AG04449 (cell line): ENCODE measurements at regions of chr11 and their contacts with region 1.

Region 1: GRCh38 chr11:10808553-10809372 is at the start of gene EIF4G2:
- DNase-seq: peak; percentile 86
- H3K4me3 ChIP-seq: peak within 1 kb of the TSS; percentile 90
- CTCF ChIP-seq: no peak

Region 2: DNA sequence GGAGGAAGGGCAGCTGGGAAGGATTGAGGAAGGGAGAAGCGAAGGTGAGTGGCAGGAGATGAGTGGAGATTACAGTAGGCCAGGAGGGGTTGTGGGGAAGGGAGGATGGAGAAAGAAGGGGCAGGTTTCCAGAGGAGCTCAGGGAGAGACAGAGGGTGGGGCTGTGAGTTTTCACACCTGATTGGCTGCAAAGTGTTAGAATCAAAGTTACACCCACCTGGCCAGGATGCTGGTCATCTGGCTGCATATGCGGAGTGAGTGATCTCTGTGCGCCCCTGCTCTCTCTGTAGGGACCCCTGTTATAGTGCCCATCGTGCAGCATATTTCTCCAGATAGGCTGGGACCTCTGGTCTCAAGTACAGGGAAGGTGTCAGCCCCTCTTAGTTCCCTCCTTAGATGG is 335.4 kb before region 1 on chr11:
- CTCF ChIA-PET with region 1: no interaction called
- POLR2A ChIA-PET with region 1: no interaction called
- DNase-seq: no peak
- H3K4me3 ChIP-seq: no peak overlapping the region
- CTCF ChIP-seq: no peak

Region 3: DNA sequence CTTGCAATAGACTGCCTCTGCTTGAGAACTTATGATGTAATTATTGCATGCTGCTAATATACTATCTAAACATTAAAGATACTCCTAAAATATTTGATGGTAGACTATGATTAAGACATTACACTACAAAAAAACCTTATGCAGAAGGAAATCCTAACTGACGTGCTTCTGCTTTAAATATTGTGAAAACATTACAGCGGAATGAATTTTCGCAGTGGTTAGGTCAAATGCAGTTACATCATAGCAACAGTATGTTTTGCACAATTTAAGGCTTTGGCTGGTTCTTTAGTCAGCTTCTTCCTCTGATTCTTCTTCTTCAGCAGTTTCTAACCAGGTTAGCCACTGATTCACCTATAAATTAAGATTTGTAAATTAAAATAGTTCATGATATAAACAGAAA is 11.2 kb before region 1 on chr11:
- CTCF ChIA-PET with region 1: interaction called, 61 read pairs
- POLR2A ChIA-PET with region 1: interaction called, 40 read pairs
- DNase-seq: no peak
- H3K4me3 ChIP-seq: no peak overlapping the region
- CTCF ChIP-seq: no peak

Region 4: GRCh38 chr11:10857709-10858438 is 49.1 kb after region 1 on chr11 and contains the start of gene ZBED5:
- CTCF ChIA-PET with region 1: interaction called, 3 read pairs
- POLR2A ChIA-PET with region 1: interaction called, 116 read pairs
- DNase-seq: peak; percentile 75
- H3K4me3 ChIP-seq: peak within 1 kb of the TSS; percentile 95
- CTCF ChIP-seq: peak; percentile 21

Region 5: DNA sequence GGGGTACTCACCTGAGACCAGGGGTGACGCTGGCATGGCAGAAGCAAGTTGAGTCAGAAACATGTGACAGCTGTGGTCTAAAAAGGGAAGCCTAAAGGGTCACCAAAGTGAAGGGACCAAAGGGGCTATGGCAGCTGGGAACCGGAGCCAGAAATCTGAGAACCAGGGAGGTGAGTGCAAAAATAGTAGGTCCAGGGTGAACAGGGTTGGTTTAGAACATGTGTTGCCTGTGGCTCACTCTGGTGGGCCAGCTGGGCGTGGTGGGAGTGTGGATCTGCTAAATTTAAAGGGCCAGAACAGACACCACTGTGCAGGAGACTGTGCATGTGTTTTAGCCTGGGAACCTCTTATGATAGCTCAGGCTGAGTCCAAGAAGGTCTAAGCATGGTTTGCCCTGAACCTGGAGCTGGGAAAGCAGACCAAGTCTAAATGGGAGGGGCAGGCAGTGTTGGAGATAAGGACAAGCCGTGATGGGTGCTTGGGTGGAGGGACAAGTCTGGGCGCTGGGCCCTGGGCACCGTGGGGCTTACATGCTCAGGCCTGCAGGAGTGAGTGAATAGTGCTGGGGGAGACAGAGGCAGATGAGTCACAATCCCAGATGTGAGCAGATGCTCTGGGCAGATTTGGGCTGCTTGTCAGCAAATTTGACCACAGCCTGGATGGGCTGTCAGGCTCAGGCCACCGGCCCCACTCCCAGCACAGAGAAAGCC is 90.5 kb after region 1 on chr11:
- CTCF ChIA-PET with region 1: no interaction called
- POLR2A ChIA-PET with region 1: interaction called, 86 read pairs
- DNase-seq: no peak
- H3K4me3 ChIP-seq: peak overlapping the region; percentile 35
- CTCF ChIP-seq: no peak

Region 6: DNA sequence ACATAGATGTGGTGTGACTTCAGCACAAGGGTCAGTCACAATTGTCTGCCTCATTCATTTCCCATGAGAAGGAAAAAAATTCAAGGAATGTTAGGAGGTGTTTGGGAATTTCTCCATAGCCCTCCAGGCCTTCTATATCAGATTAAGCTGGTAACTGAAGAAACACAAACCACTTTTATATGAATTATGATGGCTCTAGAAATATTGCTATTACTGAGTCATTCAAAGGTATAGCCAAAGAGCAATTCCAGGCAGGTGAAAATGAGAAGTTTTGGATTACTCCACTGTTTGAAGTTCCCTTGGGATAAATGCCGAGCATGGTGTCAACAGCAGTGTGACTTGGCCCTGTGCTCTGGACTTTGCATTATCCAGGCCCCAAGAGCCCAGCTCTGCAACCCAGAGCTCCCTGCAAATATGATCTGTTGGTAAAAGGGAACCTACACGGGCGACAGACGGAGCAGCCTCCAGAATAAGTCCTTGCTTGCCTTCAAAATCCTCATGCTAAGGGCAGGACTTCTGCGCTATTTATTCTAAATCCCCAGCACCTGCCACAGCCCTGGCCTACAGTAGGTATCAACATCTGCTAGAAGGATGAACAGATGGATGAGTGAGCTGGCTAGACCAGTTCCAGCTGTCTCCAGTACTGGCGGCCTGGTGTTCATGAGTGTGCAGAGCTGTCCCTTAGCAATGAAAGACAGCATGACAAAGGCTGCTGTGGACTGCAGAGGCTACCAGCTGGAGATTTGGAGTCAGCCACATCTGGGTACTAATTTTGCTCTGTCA is 116.6 kb after region 1 on chr11:
- CTCF ChIA-PET with region 1: no interaction called
- POLR2A ChIA-PET with region 1: interaction called, 54 read pairs
- DNase-seq: no peak
- H3K4me3 ChIP-seq: no peak overlapping the region
- CTCF ChIP-seq: no peak

Region 7: GRCh38 chr11:10943968-10944367 is 135.2 kb after region 1 on chr11:
- CTCF ChIA-PET with region 1: no interaction called
- POLR2A ChIA-PET with region 1: interaction called, 10 read pairs
- DNase-seq: no peak
- H3K4me3 ChIP-seq: no peak overlapping the region
- CTCF ChIP-seq: no peak

Region 8: DNA sequence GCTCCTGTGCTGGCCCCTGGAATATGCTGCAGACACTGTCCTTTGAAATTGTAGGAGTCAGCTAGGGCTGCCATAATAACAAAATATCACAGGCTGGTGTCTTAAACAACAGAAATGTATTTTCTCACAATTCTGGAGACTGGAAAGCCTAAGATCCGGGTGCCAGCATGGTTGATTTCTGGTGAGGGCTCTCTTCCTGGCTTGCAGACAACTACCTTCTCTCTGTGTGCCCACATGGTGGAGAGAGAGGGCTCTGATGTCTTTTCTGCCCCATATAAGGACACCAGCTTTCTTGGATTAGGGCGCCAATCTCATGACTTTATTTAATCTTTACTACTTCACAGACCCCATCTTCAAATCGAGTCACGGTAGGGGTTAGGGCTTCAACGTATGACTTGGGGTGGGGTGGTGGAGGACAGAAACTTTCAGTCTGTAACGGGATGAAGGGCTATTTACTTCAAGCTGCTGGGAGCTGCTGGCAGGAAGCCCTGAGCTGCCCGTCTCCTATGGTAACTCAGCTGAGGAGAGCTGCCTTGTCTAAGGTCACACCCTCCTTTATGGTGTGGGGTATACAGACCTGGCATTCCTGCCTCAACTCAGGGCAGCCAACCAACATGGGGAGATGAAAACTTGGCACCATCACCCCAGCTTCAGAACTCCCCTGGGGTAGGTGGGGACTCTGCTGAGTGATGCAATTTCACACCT is 192.0 kb after region 1 on chr11:
- CTCF ChIA-PET with region 1: no interaction called
- POLR2A ChIA-PET with region 1: no interaction called
- DNase-seq: no peak
- H3K4me3 ChIP-seq: no peak overlapping the region
- CTCF ChIP-seq: no peak